ENCODE measurements at regions of chr3 and their contacts with region 1.

Region 1: GRCh38 chr3:122322095-122323075 is 2.7 kb upstream of the CSTA start:
- DNase-seq: peak; percentile 43
- CTCF ChIP-seq: no peak

Region 2: DNA sequence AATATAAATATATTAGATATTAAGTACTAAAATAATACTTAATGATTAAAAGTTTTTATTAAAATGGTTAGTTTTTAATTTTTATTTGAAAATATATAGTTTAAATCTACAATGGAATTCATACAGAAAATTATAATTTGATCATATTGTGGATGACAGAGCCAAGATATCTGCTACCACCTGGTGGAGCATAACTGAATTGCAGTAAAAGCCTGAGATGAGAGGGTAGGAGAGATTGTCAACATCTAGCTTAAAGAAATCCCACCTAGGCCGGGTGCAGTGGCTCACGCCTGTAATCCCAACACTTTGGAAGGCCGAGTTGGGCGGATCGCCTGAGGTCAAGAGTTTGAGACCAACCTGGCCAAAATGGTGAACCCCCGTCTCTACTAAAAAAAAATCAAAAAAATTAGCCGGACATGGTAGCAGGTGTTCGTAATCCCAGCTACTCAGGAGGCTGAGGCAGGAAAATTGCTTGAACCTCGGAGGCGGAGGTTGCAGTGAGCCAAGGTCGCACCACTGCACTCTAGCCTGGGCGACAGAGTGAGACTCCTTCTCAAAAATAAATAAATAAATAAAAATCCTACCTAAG is 22.4 kb before region 1 on chr3:
- CTCF ChIA-PET with region 1: interaction called, 10 read pairs
- POLR2A ChIA-PET with region 1: no interaction called
- DNase-seq: no peak
- CTCF ChIP-seq: peak; percentile 56

Region 3: GRCh38 chr3:122305818-122306621 is 16.4 kb before region 1 on chr3:
- CTCF ChIA-PET with region 1: interaction called, 12 read pairs
- POLR2A ChIA-PET with region 1: no interaction called
- DNase-seq: no peak
- CTCF ChIP-seq: peak; percentile 36

Region 4: DNA sequence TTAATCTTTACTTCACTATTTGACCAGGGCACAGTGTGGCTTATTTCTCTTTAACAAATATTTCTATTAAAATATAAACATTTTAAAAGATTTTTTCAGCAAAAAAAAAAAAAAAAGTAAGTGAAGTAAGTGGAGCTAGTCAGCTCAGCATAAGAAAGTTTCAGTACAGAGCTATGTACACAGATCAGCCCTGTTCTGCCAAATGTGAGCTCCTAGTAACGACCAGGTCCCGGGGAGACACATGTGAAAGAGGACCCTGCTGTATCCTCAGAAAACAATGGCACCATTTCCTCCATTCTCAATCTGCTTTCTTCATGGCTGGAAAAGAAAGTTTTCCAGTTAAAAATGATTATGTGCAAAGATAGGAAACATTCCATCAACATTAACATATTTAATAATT is 16.0 kb after region 1 on chr3:
- CTCF ChIA-PET with region 1: interaction called, 10 read pairs
- POLR2A ChIA-PET with region 1: no interaction called
- DNase-seq: no peak
- CTCF ChIP-seq: no peak